GM13976 (cell line): ENCODE measurements at regions of chr6 and their contacts with region 1.

Region 1: DNA sequence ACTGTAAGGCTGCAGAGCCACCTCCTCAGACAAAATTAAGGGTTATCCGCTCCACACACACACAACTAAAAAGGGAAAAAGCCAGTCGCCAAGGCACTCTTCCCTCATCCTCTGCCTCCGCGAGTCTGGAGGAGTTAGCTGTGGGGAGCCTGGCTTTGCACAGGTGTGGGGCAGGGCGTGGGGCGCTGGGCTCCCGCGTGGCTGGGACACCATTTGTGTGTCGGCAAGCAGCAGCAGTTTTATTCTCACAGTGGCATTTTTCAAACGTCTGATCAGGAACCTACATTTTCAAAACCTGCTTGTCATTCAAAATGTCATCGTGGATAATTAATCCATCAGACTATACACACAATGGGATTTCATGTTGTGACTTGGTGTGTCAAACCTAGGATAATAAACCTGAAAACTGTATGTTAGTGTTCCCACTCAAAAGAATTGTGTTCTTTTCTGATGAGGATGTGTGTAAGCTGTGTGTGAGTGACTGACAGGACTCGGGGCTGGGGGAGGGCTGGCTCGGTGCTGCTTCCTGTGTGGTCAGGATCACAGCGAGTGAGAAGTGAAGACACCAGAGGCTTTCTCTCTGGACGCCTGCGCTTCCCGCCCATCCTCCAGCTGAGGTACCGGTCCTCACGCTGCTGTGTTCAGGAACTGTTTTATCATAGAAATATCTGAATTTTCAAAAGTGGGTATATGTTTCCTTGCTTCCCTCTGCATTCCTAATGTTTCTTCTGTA is 83.1 kb downstream of the IRF4 start:
- DNase-seq: peak; percentile 88
- CTCF ChIP-seq: no peak

Region 2: DNA sequence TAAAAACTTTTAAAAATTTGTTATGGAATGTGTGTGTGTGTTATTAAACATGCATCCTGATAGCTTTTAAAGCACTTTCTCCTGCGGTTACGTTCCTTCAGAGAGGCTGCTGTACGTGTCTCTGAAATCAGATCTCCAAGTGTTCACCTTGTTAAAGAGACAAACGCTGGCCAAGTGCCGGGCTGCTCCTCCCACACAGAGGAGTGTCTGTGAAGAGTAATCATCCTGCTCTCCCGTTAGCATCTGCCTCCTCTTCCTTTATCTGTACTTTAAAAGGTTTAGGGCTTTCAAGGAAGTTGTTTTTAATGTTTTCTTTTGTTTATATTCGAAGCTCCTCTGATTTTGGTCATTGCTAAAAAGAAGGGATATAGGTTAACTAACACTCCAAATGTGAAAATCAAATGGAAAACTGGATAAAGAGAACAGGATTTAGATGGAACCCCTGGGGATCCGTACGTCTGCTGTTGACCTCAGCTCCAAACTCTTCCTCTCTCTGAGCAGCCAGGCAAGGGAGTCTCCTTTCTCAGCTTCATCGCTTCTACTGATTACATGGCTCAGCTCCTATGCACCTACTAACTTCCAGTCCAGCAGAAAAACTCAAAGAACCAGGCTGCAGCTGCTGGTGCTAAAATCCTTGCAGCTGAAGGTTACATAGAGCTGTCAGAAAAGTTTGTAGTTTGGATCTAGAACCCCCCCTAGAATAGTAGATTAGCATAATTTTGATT is 63.0 kb before region 1 on chr6:
- in situ Hi-C with region 1: loop called (anchors 10 kb)
- DNase-seq: no peak
- CTCF ChIP-seq: no peak

Region 3: GRCh38 chr6:617445-618100 is 143.0 kb after region 1 on chr6:
- in situ Hi-C with region 1: no loop called
- DNase-seq: no peak
- CTCF ChIP-seq: no peak

Region 4: DNA sequence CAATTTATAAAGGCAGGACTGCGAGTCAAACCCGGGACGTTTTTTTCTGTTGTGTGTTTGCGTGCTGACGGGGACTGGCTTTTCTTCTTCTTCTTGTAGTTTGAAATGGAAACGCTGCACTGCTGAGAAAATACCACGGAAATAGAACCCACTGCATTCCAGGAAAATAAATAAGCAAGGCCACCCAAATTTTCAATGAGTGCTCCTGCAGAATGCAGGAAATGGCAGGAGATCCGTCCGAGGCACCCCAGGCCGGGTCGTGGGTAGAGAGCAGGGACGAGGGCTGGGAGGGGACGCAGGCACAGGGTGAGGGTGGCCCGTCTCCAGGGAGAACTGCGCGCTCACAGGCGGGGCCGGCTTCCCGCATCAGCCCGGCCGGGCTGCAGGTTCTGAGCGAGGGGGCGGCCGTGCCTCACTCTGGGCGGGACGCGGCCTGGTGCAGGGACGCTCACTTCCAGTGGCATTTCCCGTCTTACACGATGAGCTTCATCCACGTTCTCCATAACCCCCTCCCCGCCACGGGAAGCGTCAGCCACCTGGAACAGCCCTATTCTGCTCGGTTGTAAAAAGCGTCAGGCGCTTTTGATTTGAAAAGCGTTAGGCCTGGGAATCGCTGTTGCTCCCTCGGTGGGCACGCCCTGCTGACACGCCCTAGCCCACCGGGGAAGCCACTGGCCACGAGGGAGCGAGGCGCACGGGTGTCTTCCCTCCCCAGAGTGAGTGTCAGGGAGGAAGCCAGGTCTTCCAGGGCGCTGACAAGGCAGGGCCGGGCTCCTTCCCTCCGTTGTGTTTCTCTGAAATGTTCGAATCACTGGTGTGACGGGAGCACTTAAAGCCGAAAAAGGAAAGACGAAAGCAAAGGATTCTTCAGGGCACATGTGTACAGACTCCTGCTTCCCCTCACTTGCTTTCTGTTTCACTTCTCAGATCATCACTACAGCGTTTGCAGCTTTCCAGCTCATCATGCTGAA is 236.3 kb after region 1 on chr6:
- in situ Hi-C with region 1: no loop called
- DNase-seq: peak; percentile 86
- CTCF ChIP-seq: peak; percentile 8

Region 5: DNA sequence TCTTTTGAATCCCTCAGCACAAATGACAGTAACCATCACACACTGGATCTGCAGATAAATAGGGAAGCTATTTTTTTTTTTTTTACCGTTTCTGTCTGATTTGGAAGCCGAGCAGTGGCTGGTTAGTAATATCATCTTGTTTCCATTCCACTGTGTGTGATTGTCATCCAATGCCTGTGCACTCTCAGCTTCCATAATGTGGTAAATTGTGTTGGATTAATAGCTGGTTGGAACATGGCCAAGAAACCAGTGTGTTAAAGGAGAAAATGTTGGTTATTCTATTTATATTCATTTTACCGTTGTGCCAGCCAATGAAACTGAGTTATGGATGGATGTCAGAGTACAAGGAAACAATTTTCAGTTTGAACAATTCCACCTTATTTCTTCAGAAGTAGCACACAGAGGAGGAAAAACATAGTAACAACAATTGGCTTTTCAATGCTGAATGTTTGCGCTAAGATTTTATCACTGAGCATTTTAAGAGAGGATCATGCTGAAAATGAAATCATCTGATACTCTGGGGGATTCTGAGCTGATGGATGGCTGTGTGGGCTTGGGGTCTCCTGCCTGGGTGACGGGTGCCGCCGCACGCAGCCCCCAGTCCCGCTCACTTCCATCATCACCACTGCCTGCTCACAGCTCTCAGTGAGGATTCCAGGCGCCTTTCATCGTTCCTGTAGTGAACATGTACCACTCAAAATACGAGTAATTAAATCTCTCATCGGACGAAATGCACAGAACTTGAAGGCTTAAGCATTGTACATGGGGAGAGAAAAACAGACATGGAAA is 259.0 kb after region 1 on chr6:
- in situ Hi-C with region 1: no loop called
- DNase-seq: no peak
- CTCF ChIP-seq: no peak